ENCODE measurements at regions of chr12 and their contacts with region 1.

Region 1: GRCh38 chr12:63843721-63844390 is 644 bp upstream of the SRGAP1 start:
- DNase-seq: peak; percentile 93
- ATAC-seq: peak; percentile 95

Region 2: GRCh38 chr12:64072916-64073575 is 229.2 kb after region 1 on chr12:
- intact Hi-C with region 1: loop called (anchors 5 kb)
- DNase-seq: no peak
- ATAC-seq: no peak

Region 3: GRCh38 chr12:64181504-64182291 is 337.8 kb after region 1 on chr12:
- intact Hi-C with region 1: loop called (anchors 2 kb)
- DNase-seq: no peak
- ATAC-seq: peak; percentile 90

Region 4: DNA sequence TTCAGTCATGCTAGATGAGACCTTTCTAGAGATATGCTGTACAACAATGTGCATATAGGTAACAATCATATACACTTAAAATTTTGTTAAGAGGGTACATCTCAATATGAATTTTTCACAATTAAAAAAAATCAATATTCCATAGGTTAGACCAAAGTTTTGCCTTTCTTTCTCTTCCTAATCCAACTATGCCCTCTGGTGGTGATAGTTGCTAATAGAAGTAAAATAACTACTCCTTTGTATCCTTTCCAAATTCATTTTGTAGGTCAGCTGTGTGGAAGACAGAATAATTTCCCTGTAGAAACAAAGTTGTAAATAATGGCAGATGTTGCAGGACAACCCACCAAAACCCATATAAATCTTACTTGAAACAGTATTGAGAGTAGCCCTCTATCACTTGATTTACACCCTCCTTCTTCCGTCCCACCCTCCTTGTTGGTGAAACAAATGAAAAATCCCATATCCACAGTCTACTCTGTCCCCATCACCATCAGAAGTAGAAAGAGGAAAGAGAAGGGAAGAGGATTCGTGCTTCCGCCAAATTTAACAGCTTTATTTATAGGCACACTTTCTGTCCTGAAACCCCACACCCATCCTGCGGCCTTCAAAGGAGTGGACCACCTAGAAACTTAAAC is 412.4 kb after region 1 on chr12:
- intact Hi-C with region 1: loop called (anchors 2 kb)
- DNase-seq: no peak
- ATAC-seq: peak; percentile 32